ENCODE measurements at regions of chr5 and their contacts with region 1.

Region 1: DNA sequence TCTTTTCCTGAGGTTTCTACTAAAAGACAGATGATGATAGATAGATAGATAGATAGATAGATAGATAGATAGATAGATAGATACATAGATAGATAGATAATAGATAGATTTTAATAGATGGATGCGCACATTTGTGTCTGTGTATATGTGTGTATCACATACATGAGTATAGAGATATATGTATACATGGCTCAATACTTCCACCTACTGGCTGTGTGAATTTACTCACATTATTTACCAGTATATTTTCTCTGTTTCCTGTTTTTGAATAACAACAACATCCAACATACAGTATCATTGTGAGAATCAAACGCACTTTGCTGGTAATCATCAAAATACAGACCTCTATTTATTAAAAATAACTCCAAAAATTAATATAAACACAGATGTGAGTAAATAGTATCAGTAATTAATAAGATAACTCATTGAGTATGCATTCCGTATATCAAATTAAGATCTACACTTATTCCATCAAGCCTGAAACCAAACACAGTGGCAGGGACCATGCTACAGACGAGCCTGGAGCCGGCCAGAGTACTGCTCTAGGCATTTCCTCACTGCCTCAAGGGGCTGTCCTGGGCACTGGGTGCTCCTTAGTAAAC is 338.0 kb downstream of the SEMA5A start:
- DNase-seq: peak in 1 of 2 experiments; percentile 57
- H3K4me3 ChIP-seq: no peak overlapping the region
- H3K27ac ChIP-seq: no peak overlapping the region
- H3K4me1 ChIP-seq: no peaks in the 10 kb centered on the region
- H3K27me3 ChIP-seq: no peaks in the 10 kb centered on the region
- CTCF ChIP-seq: peak; percentile 94

Region 2: GRCh38 chr5:7886849-7887475 is 1321.0 kb before region 1 on chr5:
- CTCF ChIA-PET with region 1: no interaction called
- POLR2A ChIA-PET with region 1: no interaction called
- intact Hi-C with region 1: loop called (anchors 5 kb)
- DNase-seq: peak in 1 of 2 experiments; percentile 53
- H3K4me3 ChIP-seq: no peak overlapping the region
- H3K27ac ChIP-seq: no peak overlapping the region
- H3K4me1 ChIP-seq: no peaks in the 10 kb centered on the region
- H3K27me3 ChIP-seq: no peaks in the 10 kb centered on the region
- CTCF ChIP-seq: peak; percentile 74

Region 3: DNA sequence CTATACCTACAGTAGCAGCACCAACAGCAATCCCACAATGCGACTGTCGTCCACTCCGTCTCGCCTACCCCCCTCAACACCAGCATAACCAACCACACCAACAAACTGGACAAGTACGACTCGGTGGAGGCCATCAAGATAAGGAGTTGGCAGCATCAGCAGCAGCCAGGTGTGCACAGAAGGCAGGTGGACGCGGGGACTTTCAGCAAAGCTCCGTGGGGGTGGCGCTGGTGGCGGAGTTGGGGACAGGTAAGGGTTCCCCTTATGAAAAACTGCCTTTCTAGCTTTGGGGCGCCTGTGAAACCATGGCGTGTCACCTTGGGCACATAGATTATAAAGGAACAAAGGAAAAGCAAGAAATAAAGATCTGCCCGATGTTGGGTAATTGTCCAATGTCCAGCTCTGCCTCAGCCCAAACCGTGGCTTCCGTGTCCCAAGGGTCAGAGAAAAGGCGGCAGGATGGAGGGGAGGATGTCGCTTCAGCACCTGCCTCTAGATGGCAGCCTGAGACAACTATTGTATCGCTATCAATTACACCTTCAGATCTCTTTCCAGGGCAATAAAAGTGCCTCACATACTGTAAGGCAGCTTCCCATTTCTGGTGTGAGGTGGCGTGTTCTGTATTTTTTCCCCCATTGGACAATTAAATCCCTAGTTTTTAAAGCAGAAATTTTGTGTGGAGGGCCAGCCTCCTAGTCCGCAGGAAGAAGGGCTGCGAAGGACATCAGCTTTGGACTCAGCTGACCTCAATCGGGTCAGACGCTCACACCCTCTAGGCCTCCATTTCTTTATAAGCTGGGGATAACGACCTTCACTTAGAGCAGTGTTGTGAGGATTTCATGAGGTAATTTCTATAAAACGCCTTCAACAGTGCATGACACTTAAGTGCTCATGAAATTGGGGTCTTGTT is 1280.2 kb before region 1 on chr5:
- CTCF ChIA-PET with region 1: no interaction called
- POLR2A ChIA-PET with region 1: no interaction called
- intact Hi-C with region 1: loop called (anchors 2 kb)
- DNase-seq: peak; percentile 47 to 65
- H3K4me3 ChIP-seq: no peak overlapping the region
- H3K27ac ChIP-seq: no peak overlapping the region
- H3K4me1 ChIP-seq: no peaks in the 10 kb centered on the region
- H3K27me3 ChIP-seq: peaks cover 83% of the 10 kb centered on the region
- CTCF ChIP-seq: peak; percentile 91

Region 4: DNA sequence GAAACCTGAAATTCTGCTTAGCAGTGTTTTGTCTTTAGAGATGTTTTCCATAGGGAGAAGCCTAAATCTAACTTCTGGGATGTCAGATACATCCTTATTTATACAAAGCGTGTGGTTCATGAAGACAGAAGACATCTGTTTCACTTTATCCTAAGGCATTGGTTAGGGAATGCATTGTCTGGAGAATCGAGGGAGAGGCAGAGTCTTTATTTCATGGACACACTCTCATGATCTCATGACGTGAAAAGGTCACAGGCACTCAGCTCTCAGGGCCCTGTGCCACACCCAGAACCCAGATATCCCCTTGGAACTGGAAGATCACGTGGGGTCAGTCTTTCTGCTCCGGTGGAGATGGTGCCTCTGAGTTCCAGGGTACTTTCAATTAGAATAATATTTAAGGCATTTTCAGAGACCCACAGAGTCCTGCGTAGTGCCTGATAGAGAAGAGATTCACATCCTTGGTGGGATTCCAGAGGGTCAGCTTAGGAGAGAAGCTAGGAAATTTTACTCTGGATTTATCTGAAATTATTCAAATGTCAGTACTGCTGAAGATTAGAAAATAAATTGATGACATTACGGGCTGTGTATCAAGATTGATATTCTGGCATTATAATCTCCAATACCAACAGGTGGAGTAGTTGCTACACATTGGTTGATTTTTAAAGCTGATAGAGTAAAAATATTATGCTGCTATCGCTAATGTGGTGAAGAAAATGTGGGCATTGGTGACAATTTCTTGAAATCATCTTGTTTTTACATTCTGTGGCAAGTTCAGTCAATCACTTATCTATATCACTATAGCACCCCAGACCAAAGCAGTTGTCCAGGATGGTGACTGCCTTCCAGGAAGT is 960.6 kb before region 1 on chr5:
- CTCF ChIA-PET with region 1: no interaction called
- POLR2A ChIA-PET with region 1: no interaction called
- intact Hi-C with region 1: loop called (anchors 10 kb)
- DNase-seq: no peak
- H3K4me3 ChIP-seq: no peak overlapping the region
- H3K27ac ChIP-seq: no peak overlapping the region
- H3K4me1 ChIP-seq: no peaks in the 10 kb centered on the region
- H3K27me3 ChIP-seq: peaks cover 52% of the 10 kb centered on the region
- CTCF ChIP-seq: peak; percentile 43; the same call in 1 of the 2 replicates

Region 5: DNA sequence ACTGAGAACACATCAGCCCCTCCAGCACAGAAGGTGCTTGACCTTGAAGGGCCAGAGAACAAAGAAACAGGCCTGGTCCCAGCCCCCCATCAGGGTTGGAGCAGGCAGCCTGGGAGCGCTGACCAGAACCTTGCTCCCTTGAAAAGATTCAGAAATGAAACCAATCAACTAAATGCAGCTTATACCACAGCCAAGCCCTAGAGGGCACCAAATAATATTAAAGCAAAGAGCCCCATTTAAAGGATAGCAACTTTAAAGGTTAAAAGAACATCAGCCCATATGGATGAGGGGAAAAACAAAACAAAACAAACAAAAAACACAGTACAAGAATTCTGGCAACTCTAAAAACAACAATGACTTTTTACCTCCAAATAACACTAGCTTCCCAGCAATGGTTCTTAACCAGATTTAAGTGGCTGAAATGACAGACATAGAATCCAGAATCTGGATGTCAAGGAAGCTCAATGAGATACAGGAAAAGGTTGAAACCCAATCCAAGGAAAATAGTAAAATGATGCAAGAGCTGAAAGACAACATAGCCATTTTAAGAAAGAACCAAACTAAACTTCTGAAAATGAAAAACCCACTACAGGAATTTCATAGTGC is 867.1 kb before region 1 on chr5:
- CTCF ChIA-PET with region 1: no interaction called
- POLR2A ChIA-PET with region 1: no interaction called
- intact Hi-C with region 1: loop called (anchors 10 kb)
- DNase-seq: no peak
- H3K4me3 ChIP-seq: no peak overlapping the region
- H3K27ac ChIP-seq: no peak overlapping the region
- H3K4me1 ChIP-seq: no peaks in the 10 kb centered on the region
- H3K27me3 ChIP-seq: peaks cover 10% of the 10 kb centered on the region
- CTCF ChIP-seq: peak; percentile 80

Region 6: GRCh38 chr5:8756498-8757084 is 451.3 kb before region 1 on chr5:
- CTCF ChIA-PET with region 1: no interaction called
- POLR2A ChIA-PET with region 1: no interaction called
- intact Hi-C with region 1: loop called (anchors 2 kb)
- DNase-seq: peak in 1 of 2 experiments; percentile 43
- H3K4me3 ChIP-seq: no peak overlapping the region
- H3K27ac ChIP-seq: no peak overlapping the region
- H3K4me1 ChIP-seq: no peaks in the 10 kb centered on the region
- H3K27me3 ChIP-seq: peaks cover 16% of the 10 kb centered on the region; the same call in 1 of the 2 replicates
- CTCF ChIP-seq: peak; percentile 83

Region 7: DNA sequence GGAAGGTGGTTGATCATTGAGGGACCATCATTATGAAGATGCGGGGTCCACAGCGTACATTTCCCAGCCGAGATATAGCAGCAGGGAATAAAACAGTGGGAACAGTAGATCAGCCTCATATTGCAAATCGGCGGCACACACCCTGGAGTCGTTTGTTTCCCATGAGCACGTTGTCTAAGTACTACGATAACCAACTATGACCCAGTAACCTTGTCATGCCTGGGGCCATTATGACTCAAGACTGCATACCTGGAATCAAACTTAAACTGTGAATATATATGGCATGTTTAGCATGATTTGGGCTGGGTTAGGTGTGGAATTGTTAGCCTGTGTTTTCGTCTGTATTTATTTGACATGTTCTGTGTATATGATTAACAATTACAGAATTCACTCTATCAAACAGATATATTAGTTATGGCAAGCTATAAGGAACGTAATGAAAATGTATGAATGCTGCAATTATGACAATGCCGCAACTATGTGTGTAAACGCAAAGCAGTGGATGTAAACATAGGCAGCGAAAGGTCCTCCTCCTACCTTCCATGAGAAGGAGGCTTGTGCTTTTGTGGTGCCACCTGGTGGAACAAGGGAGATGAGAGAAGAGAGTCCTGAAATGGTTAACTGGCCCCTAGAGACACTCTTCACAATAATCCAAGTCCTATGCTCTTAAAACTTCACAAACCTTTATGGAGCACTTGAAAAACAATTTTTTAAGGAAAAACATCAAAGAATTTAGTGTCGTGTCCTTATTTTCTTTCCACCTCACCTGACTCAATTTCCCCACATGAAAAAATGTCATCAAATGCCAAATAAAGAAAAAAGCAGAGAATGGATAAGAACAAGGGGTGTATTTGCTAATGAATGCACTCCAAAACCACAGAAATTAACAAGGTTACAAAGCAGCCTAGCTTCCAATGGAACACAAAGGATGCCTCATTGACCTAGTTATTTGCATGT is 290.9 kb after region 1 on chr5:
- CTCF ChIA-PET with region 1: no interaction called
- POLR2A ChIA-PET with region 1: no interaction called
- intact Hi-C with region 1: no loop called
- DNase-seq: no peak
- H3K4me3 ChIP-seq: no peak overlapping the region
- H3K27ac ChIP-seq: no peak overlapping the region
- H3K4me1 ChIP-seq: no peaks in the 10 kb centered on the region
- H3K27me3 ChIP-seq: no peaks in the 10 kb centered on the region
- CTCF ChIP-seq: peak; percentile 58

Region 8: DNA sequence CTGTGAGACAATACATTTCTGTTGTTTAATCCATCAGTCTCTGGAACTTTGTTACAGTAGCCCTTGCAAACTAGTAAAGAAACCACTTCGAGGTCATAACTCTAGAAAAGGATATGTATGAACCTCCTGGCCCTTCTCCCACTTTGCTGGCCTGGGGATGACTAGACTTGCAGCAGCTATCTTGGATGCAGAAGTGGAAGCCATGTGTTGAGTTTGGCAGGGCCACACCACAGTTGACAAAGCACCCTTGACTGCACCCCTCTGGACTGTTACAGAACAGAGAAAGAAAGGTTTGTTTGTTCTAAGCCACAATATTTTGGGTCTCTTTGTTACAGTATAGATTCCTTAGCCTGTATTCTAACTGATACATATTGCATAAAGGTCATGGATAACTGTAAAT is 605.4 kb after region 1 on chr5:
- CTCF ChIA-PET with region 1: no interaction called
- POLR2A ChIA-PET with region 1: no interaction called
- intact Hi-C with region 1: no loop called
- DNase-seq: no peak
- H3K4me3 ChIP-seq: no peak overlapping the region
- H3K27ac ChIP-seq: no peak overlapping the region
- H3K4me1 ChIP-seq: no peaks in the 10 kb centered on the region
- H3K27me3 ChIP-seq: no peaks in the 10 kb centered on the region
- CTCF ChIP-seq: no peak